ENCODE measurements at regions of chr10 and their contacts with region 1.

Region 1: GRCh38 chr10:119028900-119029612 is 458 bp upstream of the NANOS1 start:
- DNase-seq: peak; percentile 58 to 79
- H3K4me3 ChIP-seq: peak overlapping the region; percentile 26; the same call in 1 of the 2 replicates
- H3K27ac ChIP-seq: no peak overlapping the region
- H3K4me1 ChIP-seq: peaks cover 46% of the 10 kb centered on the region
- H3K27me3 ChIP-seq: no peaks in the 10 kb centered on the region
- CTCF ChIP-seq: no peak; the same call in 1 of the 2 replicates

Region 2: GRCh38 chr10:118568327-118568848 is 460.7 kb before region 1 on chr10:
- CTCF ChIA-PET with region 1: no interaction called
- POLR2A ChIA-PET with region 1: no interaction called
- intact Hi-C with region 1: loop called (anchors 5 kb)
- DNase-seq: peak; percentile 30 to 42
- H3K4me3 ChIP-seq: peak overlapping the region; percentile 31; the same call in 1 of the 2 replicates
- H3K27ac ChIP-seq: no peak overlapping the region
- H3K4me1 ChIP-seq: no peaks in the 10 kb centered on the region; the same call in 1 of the 2 replicates
- H3K27me3 ChIP-seq: no peaks in the 10 kb centered on the region
- CTCF ChIP-seq: peak; percentile 84

Region 3: DNA sequence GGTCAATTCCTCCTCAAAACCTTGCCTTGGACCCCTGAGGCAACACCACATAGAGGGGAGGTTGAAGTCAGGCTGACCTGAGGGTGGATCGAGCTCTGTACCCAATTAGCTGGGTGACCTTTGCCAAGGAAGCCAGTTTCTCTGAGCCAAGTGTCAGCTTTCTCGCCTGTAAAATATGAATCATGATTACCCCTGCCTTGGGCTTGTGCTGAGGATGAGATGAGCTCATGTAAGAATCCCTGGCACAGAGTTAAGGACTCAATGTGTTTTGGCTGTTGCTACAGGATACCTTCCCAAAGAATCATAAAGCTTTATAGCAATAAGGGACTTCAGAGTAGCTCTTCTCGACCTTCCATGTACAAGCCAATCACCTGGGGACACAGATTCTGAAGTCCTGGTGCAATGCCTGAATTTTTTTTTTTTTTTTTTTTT is 230.8 kb before region 1 on chr10:
- CTCF ChIA-PET with region 1: no interaction called
- POLR2A ChIA-PET with region 1: no interaction called
- intact Hi-C with region 1: loop called (anchors 5 kb)
- DNase-seq: peak in 1 of 2 experiments; percentile 83
- H3K4me3 ChIP-seq: no peak overlapping the region
- H3K27ac ChIP-seq: 0 out of 2 replicates have a peak overlapping the region, but pooled peaks have one; percentile 34
- H3K4me1 ChIP-seq: peaks cover 29% of the 10 kb centered on the region
- H3K27me3 ChIP-seq: no peaks in the 10 kb centered on the region
- CTCF ChIP-seq: no peak

Region 4: GRCh38 chr10:118911361-118911760 is 117.7 kb before region 1 on chr10:
- CTCF ChIA-PET with region 1: no interaction called
- POLR2A ChIA-PET with region 1: no interaction called
- intact Hi-C with region 1: loop called (anchors 2 kb)
- DNase-seq: peak; percentile 59 to 94
- H3K4me3 ChIP-seq: no peak overlapping the region
- H3K27ac ChIP-seq: peak overlapping the region; percentile 87
- H3K4me1 ChIP-seq: peaks cover 41% of the 10 kb centered on the region
- H3K27me3 ChIP-seq: no peaks in the 10 kb centered on the region
- CTCF ChIP-seq: no peak

Region 5: DNA sequence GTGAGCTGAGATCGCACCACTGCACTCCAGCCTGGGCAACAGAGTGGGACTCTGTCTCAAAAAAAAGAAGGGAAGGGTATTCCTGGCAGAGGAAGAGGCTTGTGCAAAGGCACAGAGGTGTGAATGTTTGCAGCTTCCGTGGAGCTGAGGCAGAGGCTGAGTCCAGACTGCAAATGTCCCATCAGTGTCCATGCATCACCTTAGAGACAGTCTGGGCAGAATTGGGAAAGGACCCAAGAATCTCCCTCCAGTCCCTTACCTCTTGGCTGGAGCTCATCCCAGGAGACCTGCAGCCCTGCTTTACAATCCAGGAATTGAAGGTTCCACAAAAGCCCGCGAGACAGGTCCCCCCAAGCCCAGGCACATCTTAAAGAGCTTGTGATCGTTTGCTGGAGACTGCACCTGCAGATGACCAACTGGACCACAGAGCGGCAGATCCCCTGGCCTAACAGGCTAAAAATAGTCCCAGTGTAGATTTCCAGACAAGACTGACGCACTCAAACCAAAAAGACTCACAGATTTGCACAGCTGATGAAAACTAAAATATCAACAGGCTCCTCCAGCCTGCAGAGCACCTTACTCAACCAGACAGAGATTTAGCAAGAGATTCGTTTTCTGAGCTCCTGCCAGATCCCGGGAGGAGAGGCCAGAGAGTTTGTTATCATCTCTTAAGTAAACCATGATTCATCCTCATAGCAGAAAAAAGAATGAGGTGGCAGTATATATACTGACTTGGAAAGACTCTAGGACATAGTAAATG is 22.4 kb before region 1 on chr10:
- CTCF ChIA-PET with region 1: no interaction called
- POLR2A ChIA-PET with region 1: no interaction called
- intact Hi-C with region 1: loop called (anchors 1 kb)
- DNase-seq: peak; percentile 60 to 96
- H3K4me3 ChIP-seq: no peak overlapping the region
- H3K27ac ChIP-seq: peak overlapping the region; percentile 53
- H3K4me1 ChIP-seq: peaks cover 38% of the 10 kb centered on the region
- H3K27me3 ChIP-seq: no peaks in the 10 kb centered on the region
- CTCF ChIP-seq: no peak